Right ventricle myocardium superior (tissue), 1 donor: ENCODE measurements at regions of chr10 and their contacts with region 1.

Region 1: GRCh38 chr10:24209946-24210491 is 1.1 kb downstream of the KIAA1217 start:
- DNase-seq: no peak
- ATAC-seq: peak; percentile 3

Region 2: GRCh38 chr10:23630880-23631279 is 579.1 kb before region 1 on chr10:
- intact Hi-C with region 1: no loop called
- DNase-seq: no peak
- ATAC-seq: no peak

Region 3: GRCh38 chr10:24118246-24118645 is 91.8 kb before region 1 on chr10:
- intact Hi-C with region 1: no loop called
- DNase-seq: no peak
- ATAC-seq: peak; percentile 42

Region 4: DNA sequence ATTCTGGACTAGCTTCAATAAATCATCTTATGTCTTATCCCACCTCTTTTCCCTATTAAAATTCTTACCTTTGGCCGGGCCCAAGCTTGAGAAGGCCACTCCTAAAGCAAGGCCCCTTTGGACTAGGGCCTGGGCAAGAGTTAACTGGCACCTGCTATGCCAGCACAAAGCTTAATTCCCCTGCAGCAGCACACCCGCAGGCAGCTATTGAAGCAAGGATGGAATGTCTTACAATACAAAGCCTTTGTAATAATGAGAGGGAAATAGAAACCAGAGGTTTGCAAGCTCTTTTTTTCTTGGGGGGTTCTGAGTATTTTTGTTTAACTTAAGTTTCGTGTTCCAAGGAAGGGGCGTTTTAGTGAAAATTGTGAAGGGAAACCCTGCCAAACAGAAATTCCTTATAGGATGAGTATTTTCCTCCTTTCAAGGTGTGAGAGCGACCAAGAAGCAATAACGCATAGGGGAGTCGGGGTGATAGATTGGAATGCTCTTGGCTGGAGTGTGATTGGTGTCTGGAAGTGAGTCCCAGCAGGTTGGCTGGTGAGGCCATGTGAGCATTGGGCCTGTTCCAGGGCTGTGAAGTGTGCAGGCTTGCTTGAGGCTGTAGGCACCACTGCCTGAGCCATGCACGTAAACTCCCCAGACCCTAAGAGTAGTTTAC is 147.5 kb after region 1 on chr10:
- intact Hi-C with region 1: loop called (anchors 5 kb)
- DNase-seq: no peak
- ATAC-seq: peak; percentile 45